MCF 10A (cell line): ENCODE measurements at regions of chr10 and their contacts with region 1.

Region 1: GRCh38 chr10:35336084-35336831 is at the start of gene CCNY:
- DNase-seq: peak; percentile 72
- H3K4me3 Mint-ChIP-seq: peak within 1 kb of the TSS; percentile 89
- H3K27ac Mint-ChIP-seq: peak within 1 kb of the TSS; percentile 93
- H3K4me1 Mint-ChIP-seq: peaks cover 58% of the 10 kb centered on the region
- H3K27me3 Mint-ChIP-seq: no peaks in the 10 kb centered on the region
- CTCF ChIP-seq: no peak
- total RNA-seq, gene CCNY: 68.9 and 79.7 TPM in 2 replicates

Region 2: DNA sequence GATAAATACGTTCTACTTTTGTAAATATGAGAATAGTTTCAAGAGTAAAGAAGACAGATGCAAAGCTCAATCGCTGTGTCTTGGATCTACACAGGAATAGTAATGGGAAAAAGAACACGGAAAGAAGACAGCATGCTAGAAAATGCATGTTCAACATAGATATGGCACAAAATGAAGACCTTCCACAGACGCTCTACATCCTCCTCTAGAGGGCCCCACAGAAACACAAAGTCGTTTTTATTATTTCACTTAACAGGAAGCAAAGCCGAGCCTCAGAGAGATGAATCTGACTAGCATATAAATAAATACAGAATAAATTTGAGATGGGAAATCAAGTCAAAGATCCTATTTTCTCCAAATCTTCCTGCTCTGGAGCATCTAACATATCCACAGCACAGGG is 813.7 kb before region 1 on chr10:
- CTCF ChIA-PET with region 1: no interaction called
- POLR2A ChIA-PET with region 1: no interaction called
- intact Hi-C with region 1: no loop called
- DNase-seq: peak; percentile 54
- H3K4me3 Mint-ChIP-seq: no peak overlapping the region
- H3K27ac Mint-ChIP-seq: no peak overlapping the region
- H3K4me1 Mint-ChIP-seq: peaks cover 64% of the 10 kb centered on the region
- H3K27me3 Mint-ChIP-seq: no peaks in the 10 kb centered on the region
- CTCF ChIP-seq: peak; percentile 22

Region 3: GRCh38 chr10:35236739-35237138 is 99.5 kb before region 1 on chr10:
- CTCF ChIA-PET with region 1: interaction called, 3 read pairs
- POLR2A ChIA-PET with region 1: no interaction called
- intact Hi-C with region 1: loop called (anchors 1 kb)
- DNase-seq: peak; percentile 13
- H3K4me3 Mint-ChIP-seq: no peak overlapping the region
- H3K27ac Mint-ChIP-seq: no peak overlapping the region
- H3K4me1 Mint-ChIP-seq: no peaks in the 10 kb centered on the region
- H3K27me3 Mint-ChIP-seq: no peaks in the 10 kb centered on the region
- CTCF ChIP-seq: peak; percentile 19

Region 4: DNA sequence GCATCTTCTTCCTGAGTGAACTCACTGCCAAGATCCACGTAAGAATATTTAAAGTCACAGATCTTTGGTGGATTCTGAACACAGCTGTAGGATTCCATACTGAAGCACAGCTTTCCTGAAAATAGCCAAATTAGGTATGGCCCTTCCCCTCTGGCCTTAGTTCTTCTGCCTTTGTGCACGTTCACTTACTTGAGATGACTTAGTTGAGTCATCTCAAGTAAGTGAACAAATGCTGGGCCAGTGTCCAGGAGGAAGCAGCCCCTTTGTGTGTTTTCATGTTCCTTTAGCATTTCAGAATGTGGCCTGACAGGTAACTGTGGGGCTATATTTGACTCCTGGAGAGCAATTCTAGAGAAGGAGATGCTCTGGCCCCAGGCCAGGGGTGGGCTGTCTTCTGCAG is 51.5 kb after region 1 on chr10:
- CTCF ChIA-PET with region 1: no interaction called
- POLR2A ChIA-PET with region 1: no interaction called
- intact Hi-C with region 1: loop called (anchors 5 kb)
- DNase-seq: peak; percentile 77
- H3K4me3 Mint-ChIP-seq: no peak overlapping the region
- H3K27ac Mint-ChIP-seq: peak overlapping the region; percentile 62
- H3K4me1 Mint-ChIP-seq: peaks cover 39% of the 10 kb centered on the region
- H3K27me3 Mint-ChIP-seq: no peaks in the 10 kb centered on the region
- CTCF ChIP-seq: no peak

Region 5: GRCh38 chr10:35398355-35398754 is 62.1 kb after region 1 on chr10:
- CTCF ChIA-PET with region 1: no interaction called
- POLR2A ChIA-PET with region 1: no interaction called
- intact Hi-C with region 1: no loop called
- DNase-seq: no peak
- H3K4me3 Mint-ChIP-seq: no peak overlapping the region
- H3K27ac Mint-ChIP-seq: no peak overlapping the region
- H3K4me1 Mint-ChIP-seq: peaks cover 14% of the 10 kb centered on the region
- H3K27me3 Mint-ChIP-seq: no peaks in the 10 kb centered on the region
- CTCF ChIP-seq: no peak

Region 6: DNA sequence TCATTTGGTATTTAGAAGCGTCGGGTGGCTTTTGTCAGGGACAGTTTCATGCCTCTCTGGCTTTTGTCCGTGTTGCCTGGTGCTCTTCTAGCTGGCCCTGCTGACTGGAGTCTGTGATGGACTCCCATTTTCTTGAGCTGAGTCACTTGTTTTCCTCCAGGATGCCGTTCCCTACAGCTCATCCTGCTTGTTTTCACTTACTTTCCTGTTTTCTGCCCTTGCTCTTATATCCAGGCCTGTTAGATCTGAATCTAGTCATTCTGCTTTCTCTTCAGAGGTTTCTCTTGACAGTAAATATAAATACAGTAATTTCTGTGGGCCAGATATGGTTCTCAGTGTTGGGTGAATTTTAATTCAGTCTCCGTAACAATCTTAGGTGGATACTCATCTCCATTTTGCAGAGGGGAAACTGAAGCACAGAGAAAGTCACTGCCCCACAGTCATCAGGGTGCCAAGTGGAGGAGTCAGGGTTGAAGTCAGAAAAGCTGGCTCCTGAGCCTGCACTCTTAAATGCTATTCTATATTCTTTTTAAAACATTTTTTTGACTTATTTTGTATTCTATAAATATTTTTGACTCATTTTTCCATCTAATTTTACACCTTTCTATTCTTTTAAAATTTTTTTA is 85.4 kb after region 1 on chr10:
- CTCF ChIA-PET with region 1: no interaction called
- POLR2A ChIA-PET with region 1: interaction called, 20 read pairs
- intact Hi-C with region 1: loop called (anchors 5 kb)
- DNase-seq: peak; percentile 82
- H3K4me3 Mint-ChIP-seq: peak overlapping the region; percentile 63
- H3K27ac Mint-ChIP-seq: peak overlapping the region; percentile 99
- H3K4me1 Mint-ChIP-seq: peaks cover 46% of the 10 kb centered on the region
- H3K27me3 Mint-ChIP-seq: no peaks in the 10 kb centered on the region
- CTCF ChIP-seq: no peak

Region 7: GRCh38 chr10:35493196-35494118 is 157.2 kb after region 1 on chr10:
- CTCF ChIA-PET with region 1: no interaction called
- POLR2A ChIA-PET with region 1: interaction called, 6 read pairs
- intact Hi-C with region 1: loop called (anchors 2 kb)
- DNase-seq: peak; percentile 53
- H3K4me3 Mint-ChIP-seq: peak overlapping the region; percentile 35
- H3K27ac Mint-ChIP-seq: peak overlapping the region; percentile 76
- H3K4me1 Mint-ChIP-seq: peaks cover 43% of the 10 kb centered on the region
- H3K27me3 Mint-ChIP-seq: no peaks in the 10 kb centered on the region
- CTCF ChIP-seq: no peak

Region 8: DNA sequence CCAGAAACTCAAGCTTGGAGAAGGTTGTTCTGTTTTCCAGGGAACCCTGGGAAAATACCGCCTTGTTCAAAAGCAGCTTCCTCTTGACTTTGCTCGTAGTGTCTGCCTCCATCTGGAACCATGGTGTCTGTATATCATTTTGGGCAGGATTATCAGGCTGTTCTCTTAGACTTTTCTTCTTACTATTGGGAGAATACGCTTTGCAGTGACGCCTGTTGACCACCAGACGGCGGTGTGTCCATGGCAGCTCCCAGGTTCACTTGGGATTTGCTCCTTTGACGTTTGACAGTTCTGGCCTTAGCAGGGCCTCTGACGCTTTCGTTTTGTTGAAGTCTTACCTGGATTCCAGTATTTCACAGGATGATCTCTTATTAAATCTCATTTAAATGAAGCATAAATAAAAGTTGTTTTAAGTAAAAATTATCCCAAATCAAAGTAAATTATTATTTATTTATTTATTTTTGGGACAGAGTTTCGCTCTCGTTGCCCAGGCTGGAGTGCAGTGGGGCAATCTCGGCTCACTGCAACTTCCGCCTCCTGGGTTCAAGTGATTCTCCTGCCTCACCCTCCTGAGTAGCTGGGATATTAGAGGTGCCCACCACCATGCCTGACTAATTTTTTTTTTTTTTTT is 227.1 kb after region 1 on chr10:
- CTCF ChIA-PET with region 1: interaction called, 3 read pairs
- POLR2A ChIA-PET with region 1: interaction called, 3 read pairs
- intact Hi-C with region 1: loop called (anchors 2 kb)
- DNase-seq: peak; percentile 79
- H3K4me3 Mint-ChIP-seq: no peak overlapping the region
- H3K27ac Mint-ChIP-seq: no peak overlapping the region
- H3K4me1 Mint-ChIP-seq: no peaks in the 10 kb centered on the region
- H3K27me3 Mint-ChIP-seq: no peaks in the 10 kb centered on the region
- CTCF ChIP-seq: peak; percentile 97